Caco-2 (cell line): ENCODE measurements at regions of chr11 and their contacts with region 1.

Region 1: DNA sequence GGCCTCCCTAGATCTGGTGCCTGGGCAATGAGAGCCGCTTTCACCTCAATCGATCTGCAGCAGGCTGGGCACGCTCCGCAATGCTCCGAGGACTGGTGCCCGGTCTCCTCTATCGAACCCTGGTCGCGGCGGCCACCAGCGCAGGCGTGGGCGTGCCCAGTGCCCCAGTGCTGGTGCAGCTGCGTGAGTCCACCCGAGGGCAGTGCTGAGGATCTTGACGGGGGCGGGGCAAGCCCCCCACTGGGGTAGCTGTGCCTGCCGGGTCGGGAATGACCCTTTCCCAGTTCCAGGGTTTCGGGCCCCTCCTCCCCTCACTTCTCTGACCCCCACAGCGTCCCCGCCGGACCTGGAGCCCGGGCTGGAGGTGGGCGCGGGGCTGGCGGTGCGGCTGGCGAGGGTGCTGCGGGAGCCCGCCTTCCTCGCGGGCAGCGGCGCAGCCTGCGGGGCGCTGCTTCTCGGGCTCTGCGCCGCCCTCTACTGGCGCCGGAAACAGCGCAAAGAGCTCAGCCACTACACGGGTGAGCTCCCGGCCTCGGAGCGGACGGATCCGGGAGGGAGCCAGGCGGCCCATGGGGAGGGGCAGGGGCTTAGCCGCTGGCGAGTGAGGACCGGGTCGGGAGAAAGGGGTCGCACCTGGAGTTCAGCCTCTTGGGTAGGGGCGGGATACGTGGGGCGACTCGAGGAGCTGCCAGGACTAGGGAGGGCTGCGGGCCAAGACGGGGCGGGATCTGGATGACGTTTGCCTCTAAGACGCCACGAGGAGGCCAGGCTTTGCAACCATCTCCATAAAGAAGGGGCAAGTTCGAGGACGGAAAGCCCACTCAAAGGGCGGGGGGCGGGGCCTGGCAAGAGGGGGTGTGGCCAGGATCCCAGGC is 10.9 kb downstream of the ROBO3 start:
- DNase-seq: peak; percentile 86 to 93
- H3K4me3 ChIP-seq: peak overlapping the region; percentile 62
- H3K4me3 Mint-ChIP-seq: peak overlapping the region; percentile 80
- H3K27ac Mint-ChIP-seq: peak overlapping the region; percentile 83
- H3K4me1 ChIP-seq: 0 out of 2 replicates have a peak, but pooled peaks cover 4% of the 10 kb centered on the region
- H3K4me1 Mint-ChIP-seq: peaks cover 12% of the 10 kb centered on the region
- H3K27me3 ChIP-seq: peaks cover 4% of the 10 kb centered on the region
- H3K27me3 Mint-ChIP-seq: peaks cover 16% of the 10 kb centered on the region
- CTCF ChIP-seq: peak; percentile 92 to 97

Region 2: GRCh38 chr11:124865921-124866583 is 10.1 kb before region 1 on chr11:
- CTCF ChIA-PET with region 1: interaction called, 37 read pairs
- POLR2A ChIA-PET with region 1: interaction called, 3 read pairs
- intact Hi-C with region 1: no loop called
- DNase-seq: peak; percentile 58 to 83
- H3K4me3 ChIP-seq: peak overlapping the region; percentile 19
- H3K4me3 Mint-ChIP-seq: peak overlapping the region; percentile 32
- H3K27ac Mint-ChIP-seq: no peak overlapping the region
- H3K4me1 ChIP-seq: peaks cover 22% of the 10 kb centered on the region
- H3K4me1 Mint-ChIP-seq: peaks cover 7% of the 10 kb centered on the region
- H3K27me3 ChIP-seq: peaks cover 16% of the 10 kb centered on the region
- H3K27me3 Mint-ChIP-seq: peaks cover 48% of the 10 kb centered on the region
- CTCF ChIP-seq: peak; percentile 91 to 98

Region 3: GRCh38 chr11:124891373-124891861 is 15.2 kb after region 1 on chr11:
- CTCF ChIA-PET with region 1: interaction called, 11 read pairs
- POLR2A ChIA-PET with region 1: no interaction called
- intact Hi-C with region 1: no loop called
- DNase-seq: no peak
- H3K4me3 ChIP-seq: no peak overlapping the region
- H3K4me3 Mint-ChIP-seq: no peak overlapping the region
- H3K27ac Mint-ChIP-seq: no peak overlapping the region
- H3K4me1 ChIP-seq: no peaks in the 10 kb centered on the region
- H3K4me1 Mint-ChIP-seq: no peaks in the 10 kb centered on the region
- H3K27me3 ChIP-seq: peaks cover 5% of the 10 kb centered on the region
- H3K27me3 Mint-ChIP-seq: peaks cover 20% of the 10 kb centered on the region
- CTCF ChIP-seq: no peak

Region 4: GRCh38 chr11:124934862-124935547 is 58.8 kb after region 1 on chr11:
- CTCF ChIA-PET with region 1: interaction called, 14 read pairs
- POLR2A ChIA-PET with region 1: no interaction called
- intact Hi-C with region 1: no loop called
- DNase-seq: peak in 1 of 2 experiments; percentile 44
- H3K4me3 ChIP-seq: no peak overlapping the region
- H3K4me3 Mint-ChIP-seq: no peak overlapping the region
- H3K27ac Mint-ChIP-seq: no peak overlapping the region
- H3K4me1 ChIP-seq: peaks cover 13% of the 10 kb centered on the region
- H3K4me1 Mint-ChIP-seq: no peaks in the 10 kb centered on the region
- H3K27me3 ChIP-seq: no peaks in the 10 kb centered on the region
- H3K27me3 Mint-ChIP-seq: peaks cover 3% of the 10 kb centered on the region
- CTCF ChIP-seq: no peak

Region 5: DNA sequence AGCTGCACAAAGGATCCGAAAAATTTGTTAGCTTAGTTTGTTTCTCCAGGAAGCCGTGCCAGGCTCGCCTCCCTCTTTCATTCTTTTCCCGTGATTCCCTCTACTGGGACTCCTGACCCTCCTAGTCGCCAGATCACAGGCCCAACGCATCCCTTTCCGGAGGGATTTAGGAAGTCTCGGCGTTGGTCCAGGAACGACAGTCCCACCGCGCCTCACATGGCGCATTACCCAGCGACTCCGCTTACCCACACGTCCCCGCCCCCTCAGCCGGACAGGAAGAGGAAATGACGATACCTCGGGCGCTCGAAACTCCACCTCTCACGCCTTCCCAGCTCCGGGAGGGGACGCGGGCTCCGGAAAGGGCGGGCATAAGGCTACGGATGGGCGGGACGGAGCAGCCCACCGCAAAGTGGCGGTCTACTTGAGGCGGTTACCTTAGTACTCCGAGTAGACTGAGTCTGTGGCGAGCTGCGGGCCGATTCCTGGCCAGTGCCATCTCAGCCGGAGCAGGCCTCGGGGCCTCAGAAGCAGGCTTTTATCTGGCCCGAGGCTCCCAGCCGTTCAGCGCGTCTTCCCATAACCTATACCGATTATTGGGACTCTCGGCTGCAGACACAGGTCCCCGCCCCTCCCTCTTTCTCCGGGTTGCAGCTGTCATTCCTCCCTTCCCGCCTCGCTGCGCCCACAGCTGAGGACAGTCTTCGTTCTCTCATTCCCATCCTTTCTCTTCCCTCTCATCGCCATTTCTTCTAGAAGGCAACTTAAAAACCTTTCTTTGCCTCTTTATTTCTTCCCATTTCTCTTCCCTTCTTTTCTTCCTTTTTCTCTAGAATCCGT is 77.8 kb after region 1 on chr11 and contains the start of gene CCDC15:
- CTCF ChIA-PET with region 1: interaction called, 14 read pairs
- POLR2A ChIA-PET with region 1: interaction called, 4 read pairs
- intact Hi-C with region 1: loop called (anchors 1 kb)
- DNase-seq: peak; percentile 98 to 99
- H3K4me3 ChIP-seq: peak within 1 kb of the TSS; percentile 65
- H3K4me3 Mint-ChIP-seq: no peak within 1 kb of the TSS
- H3K27ac Mint-ChIP-seq: no peak within 1 kb of the TSS
- H3K4me1 ChIP-seq: peaks cover 5% of the 10 kb centered on the region; the same call in 1 of the 2 replicates
- H3K4me1 Mint-ChIP-seq: no peaks in the 10 kb centered on the region
- H3K27me3 ChIP-seq: no peaks in the 10 kb centered on the region
- H3K27me3 Mint-ChIP-seq: no peaks in the 10 kb centered on the region
- CTCF ChIP-seq: no peak
- total RNA-seq, gene CCDC15: 4.0 TPM in 2 replicates

Region 6: DNA sequence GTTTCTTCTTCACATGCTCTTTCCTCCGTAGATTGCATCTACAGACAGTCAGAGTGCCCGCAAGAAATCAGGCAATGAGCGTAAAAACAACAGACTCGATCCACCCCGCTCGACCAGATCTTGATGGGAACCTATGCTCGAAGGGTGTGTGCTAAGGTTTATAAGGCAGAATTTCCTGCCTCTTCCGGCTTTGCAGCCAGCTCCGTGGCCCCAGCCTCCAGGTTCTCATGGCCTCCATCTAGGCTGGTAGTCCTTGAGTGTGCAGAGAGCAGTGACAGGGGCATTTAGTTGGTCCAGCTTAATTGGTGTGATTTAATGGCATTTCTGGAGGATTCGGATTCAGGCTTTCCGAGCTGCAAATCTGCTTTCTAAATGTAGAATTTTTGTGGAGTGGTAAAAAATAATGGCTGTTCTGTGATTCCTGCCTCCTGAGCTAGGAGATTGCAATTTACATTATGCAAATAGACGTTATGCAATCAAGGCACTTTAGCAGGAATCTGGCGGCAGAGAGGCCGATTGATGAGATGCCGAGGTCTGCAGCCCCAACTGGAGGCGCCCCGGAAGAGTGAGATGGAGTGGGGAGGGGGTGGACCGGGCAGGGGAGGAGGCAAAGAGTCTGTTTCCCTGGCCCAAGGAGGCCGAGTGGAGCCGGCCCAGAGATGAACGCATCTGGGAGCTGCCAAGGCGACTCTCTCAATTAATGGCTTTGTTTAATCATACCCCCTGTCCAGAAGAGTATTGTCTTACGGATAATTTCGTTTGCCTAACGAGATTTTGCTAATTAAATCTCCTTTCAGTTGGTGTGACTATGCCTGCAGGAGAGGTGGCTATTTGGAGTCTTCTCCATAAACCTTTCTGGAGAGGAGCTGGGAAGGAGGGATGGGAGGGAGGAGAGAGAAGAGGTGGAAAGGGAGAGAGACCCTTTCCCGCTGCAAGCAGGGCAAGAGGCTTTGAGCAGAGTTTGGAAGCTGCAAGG is 363.7 kb after region 1 on chr11:
- CTCF ChIA-PET with region 1: no interaction called
- POLR2A ChIA-PET with region 1: no interaction called
- intact Hi-C with region 1: no loop called
- DNase-seq: no peak
- H3K4me3 ChIP-seq: no peak overlapping the region
- H3K4me3 Mint-ChIP-seq: no peak overlapping the region
- H3K27ac Mint-ChIP-seq: no peak overlapping the region
- H3K4me1 ChIP-seq: no peaks in the 10 kb centered on the region
- H3K4me1 Mint-ChIP-seq: no peaks in the 10 kb centered on the region
- H3K27me3 ChIP-seq: peaks cover 2% of the 10 kb centered on the region; the same call in 1 of the 2 replicates
- H3K27me3 Mint-ChIP-seq: peaks cover 30% of the 10 kb centered on the region
- CTCF ChIP-seq: no peak